HepG2 (cell line): ENCODE measurements at regions of chr18 and their contacts with region 1.

Region 1: DNA sequence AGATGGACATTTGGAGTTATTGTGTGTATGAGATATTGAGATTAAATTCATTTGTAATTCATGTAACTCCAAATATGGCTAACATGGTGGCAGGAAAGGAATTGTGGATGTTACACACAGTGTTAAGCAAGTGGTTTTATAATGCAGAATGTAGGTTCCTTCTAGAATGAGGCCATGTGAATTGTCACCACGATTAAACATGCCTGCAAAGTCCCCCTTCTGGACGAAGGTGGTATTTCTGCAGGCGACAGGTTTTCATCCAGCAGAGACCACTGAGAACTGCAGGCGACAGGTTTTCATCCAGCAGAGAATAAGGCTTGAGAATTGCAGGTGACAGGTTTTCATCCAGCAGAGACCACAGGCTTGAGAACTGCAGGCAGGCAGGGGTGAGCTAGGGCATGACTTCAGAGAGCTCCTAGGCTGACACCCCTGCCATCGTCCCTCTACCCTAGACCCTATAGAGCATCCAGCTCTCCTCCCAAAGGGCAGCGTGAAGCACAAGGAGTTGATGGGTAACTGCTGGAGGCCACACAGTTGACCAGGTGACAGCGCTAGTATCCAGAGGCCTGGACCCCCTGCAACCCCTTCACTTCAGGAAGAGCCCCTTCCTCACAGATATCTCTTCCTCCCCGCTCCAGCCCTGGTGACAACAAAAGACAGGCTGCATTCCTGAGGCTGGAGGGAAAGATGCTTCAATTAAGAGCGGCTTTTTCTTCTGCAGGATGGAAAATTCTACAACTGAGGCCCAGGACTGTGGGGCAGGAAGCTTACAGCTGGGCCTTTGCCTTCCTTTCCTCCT is 175.8 kb downstream of the LOXHD1 start:
- DNase-seq: peak; percentile 28
- ATAC-seq: peak; percentile 84
- H3K4me3 ChIP-seq: no peak overlapping the region
- H3K27ac ChIP-seq: no peak overlapping the region
- H3K4me1 ChIP-seq: no peaks in the 10 kb centered on the region
- H3K27me3 ChIP-seq: peaks cover 0 to 18% of the 10 kb centered on the region in 2 experiments; a peak in 2 of 5 replicates
- CTCF ChIP-seq: peak; percentile 61
- EP300 ChIP-seq: no peak
- POLR2A ChIP-seq: no peak
- RAD21 ChIP-seq: no peak

Region 2: GRCh38 chr18:46148810-46149209 is 332.4 kb before region 1 on chr18:
- CTCF ChIA-PET with region 1: interaction called, 7 read pairs
- POLR2A ChIA-PET with region 1: no interaction called
- in situ Hi-C with region 1: loop called (anchors 25 kb)
- intact Hi-C with region 1: no loop called
- DNase-seq: peak; percentile 59
- ATAC-seq: peak; percentile 81
- H3K4me3 ChIP-seq: no peak overlapping the region
- H3K27ac ChIP-seq: no peak overlapping the region
- H3K4me1 ChIP-seq: peaks cover 20% of the 10 kb centered on the region
- H3K27me3 ChIP-seq: no peaks in the 10 kb centered on the region; a peak in 2 of 5 replicates
- CTCF ChIP-seq: peak; percentile 77
- EP300 ChIP-seq: no peak
- POLR2A ChIP-seq: no peak
- RAD21 ChIP-seq: 0 out of 2 replicates have a peak, but pooled peaks have one; percentile 24

Region 3: GRCh38 chr18:46281185-46282176 is 199.8 kb before region 1 on chr18:
- CTCF ChIA-PET with region 1: interaction called, 17 read pairs
- POLR2A ChIA-PET with region 1: no interaction called
- in situ Hi-C with region 1: loop called (anchors 5 kb)
- intact Hi-C with region 1: loop called (anchors 1 kb)
- DNase-seq: peak; percentile 44
- ATAC-seq: peak; percentile 90
- H3K4me3 ChIP-seq: no peak overlapping the region
- H3K27ac ChIP-seq: no peak overlapping the region
- H3K4me1 ChIP-seq: no peaks in the 10 kb centered on the region; the same call in 1 of the 2 replicates
- H3K27me3 ChIP-seq: 0 out of 5 replicates have a peak, but pooled peaks cover 0 to 6% of the 10 kb centered on the region in 2 experiments
- CTCF ChIP-seq: peak; percentile 80
- EP300 ChIP-seq: no peak
- POLR2A ChIP-seq: no peak
- RAD21 ChIP-seq: peak; percentile 75

Region 4: DNA sequence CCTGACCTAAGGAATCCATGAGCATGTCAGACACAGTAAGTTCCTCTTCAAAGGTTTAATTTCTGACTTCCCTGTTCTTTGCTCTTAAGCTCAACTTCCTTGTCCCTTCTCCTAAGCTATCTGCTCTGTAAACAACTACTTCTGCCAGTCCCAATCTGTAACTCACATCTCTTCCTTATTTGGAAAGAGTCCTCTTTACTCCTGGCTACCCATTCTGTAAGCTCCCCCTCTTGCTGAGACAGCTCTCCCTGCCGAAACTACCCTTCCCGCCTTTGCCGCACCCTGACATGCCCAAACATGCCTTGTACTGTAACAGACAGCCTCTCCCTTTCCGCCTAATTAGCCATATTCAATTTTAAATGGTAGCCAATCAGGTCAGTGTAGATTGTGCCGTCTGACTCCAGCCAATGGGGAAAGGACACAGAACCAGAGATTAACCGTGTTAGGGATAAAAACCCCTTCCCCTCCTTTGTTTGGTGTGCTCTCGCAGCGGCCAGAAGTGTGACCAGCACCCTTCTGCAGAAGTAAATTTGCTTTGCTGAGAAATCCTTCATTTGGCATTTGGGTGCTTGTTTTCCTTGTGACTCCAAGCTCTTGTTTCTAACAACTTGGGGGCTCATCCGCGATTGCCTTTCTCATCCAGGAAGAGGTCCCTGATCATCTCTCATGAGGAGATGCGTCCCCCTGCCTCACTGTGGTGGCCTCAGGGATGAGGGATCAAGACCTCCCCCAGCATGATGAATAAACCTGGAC is 387.1 kb after region 1 on chr18:
- CTCF ChIA-PET with region 1: no interaction called
- POLR2A ChIA-PET with region 1: no interaction called
- in situ Hi-C with region 1: no loop called
- intact Hi-C with region 1: no loop called
- DNase-seq: no peak
- ATAC-seq: no peak
- H3K4me3 ChIP-seq: no peak overlapping the region
- H3K27ac ChIP-seq: no peak overlapping the region
- H3K4me1 ChIP-seq: peaks cover 6% of the 10 kb centered on the region
- H3K27me3 ChIP-seq: no peaks in the 10 kb centered on the region
- CTCF ChIP-seq: no peak
- EP300 ChIP-seq: no peak
- POLR2A ChIP-seq: no peak
- RAD21 ChIP-seq: no peak

Region 5: GRCh38 chr18:47283476-47283875 is 802.2 kb after region 1 on chr18:
- CTCF ChIA-PET with region 1: no interaction called
- POLR2A ChIA-PET with region 1: no interaction called
- in situ Hi-C with region 1: no loop called
- intact Hi-C with region 1: no loop called
- DNase-seq: peak; percentile 39
- ATAC-seq: peak; percentile 90
- H3K4me3 ChIP-seq: no peak overlapping the region
- H3K27ac ChIP-seq: no peak overlapping the region
- H3K4me1 ChIP-seq: peaks cover 5% of the 10 kb centered on the region; the same call in 1 of the 2 replicates
- H3K27me3 ChIP-seq: no peaks in the 10 kb centered on the region; a peak in 1 of 5 replicates
- CTCF ChIP-seq: peak; percentile 63
- EP300 ChIP-seq: no peak
- POLR2A ChIP-seq: no peak
- RAD21 ChIP-seq: peak; percentile 28; the same call in 1 of the 2 replicates